Right ventricle myocardium inferior (tissue), 1 donor: ENCODE measurements at regions of chr2 and their contacts with region 1.

Region 1: GRCh38 chr2:35973132-35973736 is 382.3 kb upstream of the CRIM1 start:
- DNase-seq: no peak
- ATAC-seq: no peak

Region 2: DNA sequence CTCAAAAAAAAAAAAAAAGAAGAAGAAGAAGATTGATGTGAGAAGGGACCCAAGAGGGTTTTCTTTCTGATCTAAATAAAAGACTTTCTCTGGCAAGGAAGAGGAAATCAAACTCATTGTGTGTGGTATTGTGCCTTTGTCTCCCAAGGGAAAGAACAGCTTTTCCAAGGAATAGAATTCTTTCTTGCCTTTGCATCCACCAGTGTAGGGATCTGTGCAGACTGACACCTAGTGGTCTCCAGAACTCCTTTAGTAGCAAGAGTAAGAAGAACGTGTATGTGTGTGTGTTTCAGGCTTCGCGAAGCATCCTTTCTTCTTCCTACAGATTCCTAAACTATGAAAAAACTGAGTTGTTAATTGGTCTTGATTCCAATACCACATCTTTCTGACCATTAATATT is 348.9 kb after region 1 on chr2:
- intact Hi-C with region 1: loop called (anchors 2 kb)
- DNase-seq: no peak
- ATAC-seq: no peak

Region 3: DNA sequence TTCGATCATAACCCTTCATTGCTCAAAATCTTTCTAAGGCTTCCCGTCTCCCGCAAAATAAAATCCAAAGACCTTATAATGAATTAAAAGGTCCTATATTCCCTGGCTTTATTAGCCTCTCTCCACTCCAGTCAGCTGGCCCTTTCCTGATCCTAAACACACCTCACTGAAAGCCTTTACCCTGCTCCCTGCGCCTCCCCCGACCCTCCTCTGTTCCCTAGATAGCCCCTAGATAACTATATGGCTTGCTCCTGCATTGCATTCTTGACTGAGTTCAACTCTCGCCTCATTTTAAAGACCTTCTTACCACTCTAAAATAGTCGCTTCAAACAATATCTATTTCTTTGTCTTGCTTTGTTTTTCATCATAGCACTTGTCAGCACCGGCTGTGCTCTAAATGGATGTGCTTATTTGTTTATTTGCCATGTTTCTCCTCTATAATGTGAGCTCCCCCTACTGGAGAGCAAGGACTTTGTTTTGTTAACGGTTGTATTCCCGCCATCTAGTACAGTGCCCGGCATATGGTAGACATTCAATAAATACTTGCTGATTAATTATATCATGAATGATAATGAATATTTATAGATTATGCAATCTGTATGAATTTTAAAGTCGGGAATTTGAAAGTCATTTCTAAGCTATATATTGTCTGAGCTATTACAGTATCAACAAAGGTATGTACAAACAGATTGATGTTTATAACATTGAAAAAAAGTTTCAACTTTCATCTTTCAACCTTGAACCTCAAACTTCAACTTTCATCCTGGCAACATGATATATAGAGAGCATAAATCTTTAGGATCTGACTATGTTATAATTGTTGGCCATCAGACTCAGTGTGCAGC is 690.8 kb after region 1 on chr2:
- intact Hi-C with region 1: loop called (anchors 10 kb)
- DNase-seq: no peak
- ATAC-seq: peak; percentile 85